ENCODE measurements at regions of chr13 and their contacts with region 1.

Region 1: DNA sequence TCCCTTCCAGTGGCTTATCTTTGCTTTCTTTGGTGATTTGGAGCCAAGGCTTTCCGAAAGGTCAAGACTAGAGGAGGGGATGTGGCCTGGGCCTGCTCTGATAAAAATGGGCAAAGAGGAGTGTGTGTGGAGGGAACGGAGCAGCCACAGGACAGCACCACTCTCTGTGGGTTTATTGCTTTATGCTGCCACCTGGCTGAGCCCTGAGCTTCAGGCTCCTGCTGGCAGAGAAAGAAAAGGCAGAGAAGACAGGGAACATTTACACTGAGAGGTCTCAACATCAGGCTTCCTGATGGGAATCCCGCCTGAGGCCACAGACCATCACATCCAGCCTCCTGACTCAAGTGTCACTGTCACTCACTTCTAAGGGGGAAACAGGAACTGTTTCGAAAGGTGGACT is 9.2 kb upstream of the GSX1 start:
- DNase-seq: peak in 1 of 2 experiments; percentile 31
- H3K4me3 ChIP-seq: no peak overlapping the region
- H3K27ac ChIP-seq: no peak overlapping the region
- H3K4me1 ChIP-seq: no peaks in the 10 kb centered on the region
- H3K27me3 ChIP-seq: peaks cover 20% of the 10 kb centered on the region
- CTCF ChIP-seq: peak; percentile 34; the same call in 1 of the 2 replicates

Region 2: DNA sequence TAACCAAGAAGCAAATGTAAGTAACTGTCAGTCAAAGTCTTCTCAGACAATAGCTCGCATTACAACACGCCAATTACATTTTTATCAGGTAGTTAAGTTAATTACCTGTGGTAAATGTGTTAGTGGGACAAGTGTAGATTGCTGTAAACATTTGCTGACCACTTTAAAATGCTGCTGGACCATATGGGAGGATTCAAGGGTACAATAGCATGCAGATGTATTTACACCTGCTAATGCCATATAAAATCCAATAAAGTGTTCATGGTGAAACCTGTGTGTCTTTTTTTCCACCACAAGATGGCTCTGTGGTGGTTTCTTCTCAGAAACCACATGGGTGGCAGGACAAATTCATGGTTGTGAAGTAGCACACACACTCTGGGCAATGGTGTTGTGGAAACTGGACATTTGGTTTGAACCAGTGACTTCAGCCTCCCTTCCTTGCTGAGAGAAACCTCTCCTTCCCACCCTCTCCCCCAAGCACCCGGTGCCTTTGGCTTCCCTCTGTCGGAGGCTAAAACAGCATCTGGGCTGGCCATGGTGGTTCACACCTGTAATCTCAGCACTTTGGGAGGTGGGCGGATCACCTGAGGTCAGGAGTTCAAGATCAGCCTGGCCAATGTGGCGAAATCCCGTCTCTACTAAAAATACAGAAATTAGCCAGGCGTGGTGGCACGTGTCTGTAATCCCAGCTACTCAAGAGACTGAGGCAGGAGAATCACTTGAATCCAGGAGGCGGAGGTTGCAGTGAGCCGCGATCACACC is 376.8 kb before region 1 on chr13:
- CTCF ChIA-PET with region 1: no interaction called
- POLR2A ChIA-PET with region 1: no interaction called
- intact Hi-C with region 1: loop called (anchors 2 kb)
- DNase-seq: peak in 1 of 2 experiments; percentile 45
- H3K4me3 ChIP-seq: no peak overlapping the region
- H3K27ac ChIP-seq: no peak overlapping the region
- H3K4me1 ChIP-seq: no peaks in the 10 kb centered on the region
- H3K27me3 ChIP-seq: peaks cover 47% of the 10 kb centered on the region
- CTCF ChIP-seq: peak; percentile 68

Region 3: DNA sequence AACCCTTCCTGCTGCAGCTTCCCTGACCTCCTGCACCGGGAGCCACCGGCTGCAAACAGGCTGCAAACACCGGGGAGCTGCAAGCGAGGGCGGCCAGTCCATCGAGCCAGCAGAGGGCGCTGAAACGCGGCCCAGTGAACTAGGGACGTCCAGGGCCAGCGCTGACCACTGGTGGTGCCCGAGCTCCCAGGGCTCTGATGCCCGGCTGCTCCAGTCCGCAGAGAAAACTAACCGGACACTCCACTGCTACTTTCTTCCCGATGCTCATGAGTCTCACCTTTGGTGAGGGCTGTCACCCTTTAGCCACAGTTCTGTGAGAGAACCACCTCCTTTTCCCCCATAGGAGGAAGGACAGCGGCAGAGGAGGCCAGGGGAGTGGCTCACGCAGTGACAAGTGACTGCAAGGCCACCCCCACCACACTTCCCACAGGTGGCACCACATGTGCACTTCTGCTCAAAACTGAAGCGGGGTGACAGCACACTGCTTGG is 249.9 kb before region 1 on chr13:
- CTCF ChIA-PET with region 1: no interaction called
- POLR2A ChIA-PET with region 1: no interaction called
- intact Hi-C with region 1: loop called (anchors 5 kb)
- DNase-seq: peak; percentile 48 to 81
- H3K4me3 ChIP-seq: peak overlapping the region; percentile 44; the same call in 1 of the 2 replicates
- H3K27ac ChIP-seq: no peak overlapping the region
- H3K4me1 ChIP-seq: no peaks in the 10 kb centered on the region
- H3K27me3 ChIP-seq: no peaks in the 10 kb centered on the region
- CTCF ChIP-seq: peak; percentile 87

Region 4: GRCh38 chr13:28147495-28147894 is 364.4 kb after region 1 on chr13:
- CTCF ChIA-PET with region 1: no interaction called
- POLR2A ChIA-PET with region 1: no interaction called
- intact Hi-C with region 1: no loop called
- DNase-seq: peak in 1 of 2 experiments; percentile 49
- H3K4me3 ChIP-seq: no peak overlapping the region
- H3K27ac ChIP-seq: no peak overlapping the region
- H3K4me1 ChIP-seq: peaks cover 15% of the 10 kb centered on the region
- H3K27me3 ChIP-seq: no peaks in the 10 kb centered on the region
- CTCF ChIP-seq: no peak

Measured in PC-9 (cell line).